Thyroid gland (tissue), 4 donors: ENCODE measurements at regions of chr18 and their contacts with region 1.

Region 1: GRCh38 chr18:22983175-22983574 is 50.0 kb downstream of the RBBP8 start:
- DNase-seq: no peak
- H3K4me3 ChIP-seq: no peak overlapping the region
- H3K27ac ChIP-seq: no peak overlapping the region
- H3K4me1 ChIP-seq: peaks cover 0 to 8% of the 10 kb centered on the region in 2 donors
- H3K27me3 ChIP-seq: no peaks in the 10 kb centered on the region
- CTCF ChIP-seq: peak; percentile 17 to 81 (median 42)
- POLR2A ChIP-seq: no peak

Region 2: DNA sequence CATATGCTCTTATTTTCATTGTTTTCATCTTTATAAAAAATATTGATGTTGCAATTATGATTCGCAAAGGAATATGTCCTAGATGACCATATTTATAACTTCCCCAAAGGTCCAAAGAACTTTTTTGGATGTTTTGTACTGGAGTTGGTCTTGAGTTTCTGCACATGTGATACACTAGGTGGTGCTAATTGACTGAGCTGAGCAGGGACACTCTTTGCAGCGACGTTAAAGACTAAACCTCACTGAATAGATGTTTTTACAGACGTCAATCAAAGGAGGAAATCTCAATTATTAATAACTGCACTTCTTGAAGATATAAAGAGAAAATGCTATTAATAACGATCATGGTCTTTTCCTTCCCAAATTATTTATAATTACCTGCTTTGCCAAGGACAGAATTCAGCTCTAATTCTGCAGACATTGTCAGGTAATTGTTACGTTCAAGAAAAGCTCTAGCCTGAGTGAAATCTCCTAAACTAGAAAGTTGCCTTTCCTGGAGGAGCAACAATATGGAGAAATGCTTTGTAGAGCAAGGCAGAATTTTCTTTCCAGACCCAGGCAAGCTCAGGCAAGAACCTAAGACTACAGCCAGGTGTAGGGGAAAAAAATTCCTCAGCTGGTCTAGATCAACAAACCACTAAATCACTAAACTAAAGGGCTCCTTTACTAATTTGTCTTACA is 169.4 kb before region 1 on chr18:
- intact Hi-C with region 1: loop called (anchors 10 kb)
- DNase-seq: peak in 1 of 2 donors; percentile 10
- H3K4me3 ChIP-seq: no peak overlapping the region
- H3K27ac ChIP-seq: no peak overlapping the region
- H3K4me1 ChIP-seq: no peaks in the 10 kb centered on the region
- H3K27me3 ChIP-seq: no peaks in the 10 kb centered on the region
- CTCF ChIP-seq: peak in 5 of 6 experiments; percentile 40 to 70 (median 58)
- POLR2A ChIP-seq: no peak

Region 3: DNA sequence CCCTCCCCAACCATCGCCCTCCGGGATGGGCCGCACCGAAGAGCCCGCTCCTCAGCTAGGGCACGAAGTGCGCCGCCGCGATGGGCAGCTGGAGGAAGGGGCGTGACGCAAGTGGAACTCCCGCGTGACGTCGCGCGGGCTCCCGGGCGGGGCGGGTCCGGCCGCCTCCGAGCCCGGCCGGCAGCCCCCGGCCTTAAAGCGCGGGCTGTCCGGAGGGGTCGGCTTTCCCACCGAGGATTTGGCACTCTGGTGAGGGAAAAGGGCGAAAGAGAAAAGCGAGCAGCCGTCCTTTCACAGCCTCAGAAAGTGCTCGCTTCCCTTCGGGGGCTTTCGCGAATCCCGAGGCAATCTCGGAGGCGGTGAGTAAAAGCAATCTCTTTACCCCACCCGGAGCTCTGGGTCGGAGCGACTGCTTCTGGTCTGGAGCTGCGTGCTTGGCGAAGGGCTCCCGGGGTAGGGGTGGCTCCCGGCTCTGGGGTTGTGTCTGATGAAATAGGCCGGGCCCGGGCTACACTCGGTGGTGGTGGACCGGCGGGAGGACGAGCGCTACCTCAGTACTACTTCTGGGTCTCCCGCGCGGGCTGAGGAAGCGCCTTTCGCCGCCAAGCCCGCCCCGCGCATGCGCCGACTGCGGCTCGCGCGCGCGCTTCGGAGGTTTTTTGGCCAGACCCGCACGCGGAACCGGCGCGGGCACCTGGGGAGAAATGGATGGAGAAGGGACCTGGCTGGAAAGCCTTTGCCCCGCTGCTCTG is 49.8 kb before region 1 on chr18 and contains the start of gene RBBP8:
- intact Hi-C with region 1: loop called (anchors 10 kb)
- DNase-seq: peak; percentile 80 to 84
- H3K4me3 ChIP-seq: peak within 1 kb of the TSS; percentile 16 to 100 (median 69)
- H3K27ac ChIP-seq: peak within 1 kb of the TSS; percentile 84 to 97 (median 88)
- H3K4me1 ChIP-seq: peaks cover 12% of the 10 kb centered on the region in 2 donors
- H3K27me3 ChIP-seq: no peaks in the 10 kb centered on the region
- CTCF ChIP-seq: no peak
- POLR2A ChIP-seq: peak; percentile 27 to 78
- total RNA-seq, gene RBBP8: 29.2 to 51.3 (median 42.5) TPM